BJ (cell line): ENCODE measurements at regions of chr1 and their contacts with region 1.

Region 1: DNA sequence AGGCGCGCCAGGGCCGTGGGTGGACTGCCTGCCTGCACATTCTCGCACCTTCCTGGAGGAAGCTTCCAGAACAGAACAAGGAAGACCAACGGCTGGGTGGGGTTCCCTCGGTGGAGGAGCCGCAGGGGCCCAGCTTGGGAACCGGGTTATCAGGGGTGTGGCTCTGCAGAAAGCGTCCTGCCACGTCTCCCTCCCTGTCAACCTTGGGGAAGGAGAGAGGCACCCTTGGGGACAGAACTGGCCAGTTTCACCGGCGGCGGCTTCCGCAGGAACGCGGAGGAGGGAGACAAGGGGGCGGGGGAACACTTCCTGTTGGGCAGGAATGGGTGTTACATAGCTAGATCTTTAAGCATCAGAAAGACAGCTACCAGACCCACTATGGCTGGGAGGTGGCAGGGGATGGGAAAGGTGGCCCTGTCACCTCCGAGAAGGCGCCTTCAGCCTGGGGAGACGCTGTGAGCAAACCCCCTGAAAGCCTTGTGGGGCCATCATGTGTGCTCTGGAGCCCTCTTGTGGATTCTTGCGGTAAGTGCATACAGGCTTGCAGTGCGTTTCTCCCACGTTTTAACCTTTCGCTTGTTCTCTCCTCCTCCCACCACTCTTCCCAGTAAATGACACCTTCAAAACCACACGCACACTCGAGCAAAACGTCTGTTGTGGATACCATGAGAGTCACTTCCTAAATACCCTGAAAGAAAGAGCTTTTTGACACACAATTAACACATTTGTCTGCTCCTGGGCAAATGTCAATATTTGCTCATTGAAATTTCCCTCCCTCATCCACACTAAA is 3.8 kb upstream of the PLEKHA6 start:
- DNase-seq: no peak
- H3K4me3 ChIP-seq: peak overlapping the region; percentile 27
- H3K27me3 ChIP-seq: no peaks in the 10 kb centered on the region
- CTCF ChIP-seq: peak; percentile 89

Region 2: DNA sequence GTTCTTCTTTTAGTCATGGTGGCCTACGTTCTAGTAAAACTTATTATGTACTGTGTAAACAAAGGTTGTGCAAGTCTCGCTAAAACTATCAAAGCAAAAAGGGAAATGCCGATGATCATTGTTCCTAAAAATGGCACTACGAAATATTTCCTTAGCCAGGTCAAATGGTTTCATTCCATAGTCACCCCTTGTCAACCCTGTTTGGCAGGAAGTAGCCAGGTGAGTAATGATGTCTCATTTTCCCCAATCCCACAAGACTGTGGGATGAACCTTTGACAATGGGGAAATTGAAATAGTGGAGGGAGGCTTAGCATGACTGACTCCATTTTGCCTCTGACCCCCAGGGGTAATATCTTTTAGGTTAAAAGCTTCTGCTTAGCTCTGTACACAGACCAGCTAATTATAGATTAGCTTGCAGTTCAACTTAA is 191.8 kb before region 1 on chr1:
- CTCF ChIA-PET with region 1: interaction called, 23 read pairs
- POLR2A ChIA-PET with region 1: no interaction called
- DNase-seq: peak; percentile 59
- H3K4me3 ChIP-seq: no peak overlapping the region
- H3K27me3 ChIP-seq: no peaks in the 10 kb centered on the region
- CTCF ChIP-seq: no peak

Region 3: GRCh38 chr1:204213668-204214662 is 149.6 kb before region 1 on chr1 and contains the start of gene GOLT1A:
- CTCF ChIA-PET with region 1: interaction called, 164 read pairs
- POLR2A ChIA-PET with region 1: no interaction called
- DNase-seq: peak; percentile 32
- H3K4me3 ChIP-seq: no peak within 1 kb of the TSS
- H3K27me3 ChIP-seq: no peaks in the 10 kb centered on the region
- CTCF ChIP-seq: peak; percentile 87
- polyA plus RNA-seq, gene GOLT1A: 0.21 TPM in 2 replicates

Region 4: GRCh38 chr1:204296431-204296988 is 67.0 kb before region 1 on chr1:
- CTCF ChIA-PET with region 1: interaction called, 14 read pairs
- POLR2A ChIA-PET with region 1: no interaction called
- DNase-seq: peak; percentile 82
- H3K4me3 ChIP-seq: no peak overlapping the region
- H3K27me3 ChIP-seq: no peaks in the 10 kb centered on the region
- CTCF ChIP-seq: no peak

Region 5: GRCh38 chr1:204350857-204351573 is 12.5 kb before region 1 on chr1:
- CTCF ChIA-PET with region 1: interaction called, 18 read pairs
- POLR2A ChIA-PET with region 1: no interaction called
- DNase-seq: peak; percentile 13
- H3K4me3 ChIP-seq: no peak overlapping the region
- H3K27me3 ChIP-seq: no peaks in the 10 kb centered on the region
- CTCF ChIP-seq: no peak